WTC11 (cell line): ENCODE measurements at regions of chr1 and their contacts with region 1.

Region 1: DNA sequence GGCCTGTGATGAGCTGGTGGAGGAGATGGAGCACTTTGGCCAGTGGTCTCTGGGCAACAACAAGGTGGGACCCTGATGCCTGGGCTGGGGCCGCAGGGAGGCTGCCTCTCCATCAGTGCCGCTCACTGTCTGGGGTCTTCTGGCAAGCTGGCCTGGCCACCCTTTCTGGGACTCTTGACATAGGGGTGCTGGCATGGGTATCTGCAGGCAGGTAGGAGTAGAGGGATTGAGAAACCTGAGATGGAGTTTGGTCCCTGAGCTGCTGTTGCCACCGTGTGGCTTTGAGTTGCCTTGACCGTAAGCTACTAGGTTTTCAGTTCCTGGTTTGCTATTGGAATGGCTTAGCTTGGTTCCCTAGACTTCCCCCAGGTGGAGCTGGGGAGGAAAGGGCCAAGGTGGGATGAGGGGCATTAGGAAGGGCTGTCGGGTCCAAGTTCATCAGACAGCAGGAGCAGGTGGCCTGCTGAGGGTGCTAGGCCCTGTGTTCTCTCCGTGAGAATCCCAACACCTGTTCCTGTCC is 13.2 kb upstream of the MFN2 start:
- DNase-seq: peak; percentile 78
- ATAC-seq: peak; percentile 99
- H3K4me3 Mint-ChIP-seq: no peak overlapping the region
- H3K27ac Mint-ChIP-seq: peak overlapping the region; percentile 74; the same call in 1 of the 2 replicates
- H3K4me1 Mint-ChIP-seq: no peaks in the 10 kb centered on the region
- H3K27me3 Mint-ChIP-seq: no peaks in the 10 kb centered on the region
- CTCF ChIP-seq: no peak

Region 2: GRCh38 chr1:11719313-11720032 is 247.6 kb before region 1 on chr1:
- CTCF ChIA-PET with region 1: no interaction called
- POLR2A ChIA-PET with region 1: no interaction called
- DNase-seq: peak; percentile 81
- ATAC-seq: peak; percentile 75
- H3K4me3 Mint-ChIP-seq: peak overlapping the region; percentile 51
- H3K27ac Mint-ChIP-seq: no peak overlapping the region
- H3K4me1 Mint-ChIP-seq: peaks cover 9% of the 10 kb centered on the region
- H3K27me3 Mint-ChIP-seq: no peaks in the 10 kb centered on the region; the same call in 1 of the 2 replicates
- CTCF ChIP-seq: peak; percentile 96

Region 3: GRCh38 chr1:11858968-11859871 is 107.9 kb before region 1 on chr1:
- CTCF ChIA-PET with region 1: interaction called, 12 read pairs
- POLR2A ChIA-PET with region 1: no interaction called
- DNase-seq: peak; percentile 92
- ATAC-seq: peak; percentile 80
- H3K4me3 Mint-ChIP-seq: peak overlapping the region; percentile 29
- H3K27ac Mint-ChIP-seq: no peak overlapping the region
- H3K4me1 Mint-ChIP-seq: no peaks in the 10 kb centered on the region
- H3K27me3 Mint-ChIP-seq: peaks cover 46% of the 10 kb centered on the region
- CTCF ChIP-seq: no peak

Region 4: GRCh38 chr1:11907275-11908094 is 59.6 kb before region 1 on chr1:
- CTCF ChIA-PET with region 1: interaction called, 49 read pairs
- POLR2A ChIA-PET with region 1: interaction called, 61 read pairs
- DNase-seq: peak; percentile 86
- ATAC-seq: peak; percentile 54
- H3K4me3 Mint-ChIP-seq: peak overlapping the region; percentile 85
- H3K27ac Mint-ChIP-seq: peak overlapping the region; percentile 100
- H3K4me1 Mint-ChIP-seq: peaks cover 9% of the 10 kb centered on the region
- H3K27me3 Mint-ChIP-seq: no peaks in the 10 kb centered on the region; the same call in 1 of the 2 replicates
- CTCF ChIP-seq: no peak

Region 5: DNA sequence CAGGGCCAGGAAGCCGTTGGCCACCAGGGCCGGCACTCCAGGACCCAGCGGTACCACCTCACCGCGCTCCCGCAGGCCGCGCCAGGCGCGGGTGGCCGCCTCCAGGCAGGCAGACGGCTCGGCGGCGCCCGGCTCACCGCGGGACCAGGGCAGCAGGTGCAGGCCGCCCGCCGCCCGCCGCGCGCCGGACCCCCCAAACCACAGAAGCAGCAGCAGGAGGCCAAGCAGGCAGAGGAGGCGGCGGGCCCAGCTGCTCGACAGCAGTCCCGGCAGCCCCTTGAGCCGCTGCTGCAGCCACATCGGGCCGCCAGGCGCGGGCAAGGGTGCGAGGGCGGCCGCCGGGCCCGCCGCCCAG is 41.2 kb before region 1 on chr1:
- CTCF ChIA-PET with region 1: interaction called, 15 read pairs
- POLR2A ChIA-PET with region 1: no interaction called
- DNase-seq: peak; percentile 25
- ATAC-seq: peak; percentile 28
- H3K4me3 Mint-ChIP-seq: no peak overlapping the region
- H3K27ac Mint-ChIP-seq: no peak overlapping the region
- H3K4me1 Mint-ChIP-seq: peaks cover 26% of the 10 kb centered on the region
- H3K27me3 Mint-ChIP-seq: no peaks in the 10 kb centered on the region
- CTCF ChIP-seq: no peak

Region 6: DNA sequence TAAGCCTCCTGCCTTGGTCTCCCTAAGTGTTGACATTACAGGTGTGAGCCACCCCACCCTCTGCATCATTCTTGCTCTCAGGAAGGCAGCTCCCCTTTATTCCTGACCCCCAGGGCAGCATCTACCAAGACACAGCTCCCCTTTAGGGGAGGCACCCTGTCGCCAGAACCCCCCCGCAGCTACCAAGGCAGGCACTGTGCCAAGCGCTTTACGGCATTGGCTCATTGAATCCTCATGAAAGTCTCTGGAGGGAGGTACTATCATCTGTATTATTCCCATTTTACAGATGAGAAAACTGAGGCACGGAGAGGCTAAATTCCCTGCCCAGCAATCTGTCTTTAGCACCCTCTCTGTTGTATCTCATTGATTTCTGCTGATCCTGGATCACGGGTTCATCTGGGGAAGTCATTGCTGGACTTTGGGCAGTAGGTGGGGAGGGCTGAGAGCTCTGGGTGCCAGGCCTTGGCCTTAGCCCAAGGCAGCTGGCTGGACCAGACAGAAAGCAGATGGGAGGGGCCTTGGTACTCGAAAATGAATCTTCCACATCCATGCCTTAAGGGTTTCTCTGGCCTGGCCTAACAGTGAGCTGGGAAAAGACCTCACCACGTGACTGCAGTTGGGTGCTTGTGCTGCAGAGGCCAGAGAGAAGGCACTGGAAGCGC is 26.7 kb before region 1 on chr1:
- CTCF ChIA-PET with region 1: interaction called, 25 read pairs
- POLR2A ChIA-PET with region 1: interaction called, 3 read pairs
- DNase-seq: no peak
- ATAC-seq: no peak
- H3K4me3 Mint-ChIP-seq: no peak overlapping the region
- H3K27ac Mint-ChIP-seq: no peak overlapping the region
- H3K4me1 Mint-ChIP-seq: peaks cover 32% of the 10 kb centered on the region
- H3K27me3 Mint-ChIP-seq: no peaks in the 10 kb centered on the region; the same call in 1 of the 2 replicates
- CTCF ChIP-seq: no peak

Region 7: GRCh38 chr1:11979851-11980675 is 13.0 kb after region 1 on chr1 and contains the start of gene MFN2:
- CTCF ChIA-PET with region 1: interaction called, 27 read pairs
- POLR2A ChIA-PET with region 1: interaction called, 6 read pairs
- DNase-seq: peak; percentile 99
- ATAC-seq: peak; percentile 97
- H3K4me3 Mint-ChIP-seq: peak within 1 kb of the TSS; percentile 98
- H3K27ac Mint-ChIP-seq: peak within 1 kb of the TSS; percentile 99
- H3K4me1 Mint-ChIP-seq: peaks cover 21% of the 10 kb centered on the region
- H3K27me3 Mint-ChIP-seq: no peaks in the 10 kb centered on the region
- CTCF ChIP-seq: no peak
- total RNA-seq, gene MFN2: 56.8 to 63.0 TPM (median 59.8 TPM) in 3 replicates

Region 8: DNA sequence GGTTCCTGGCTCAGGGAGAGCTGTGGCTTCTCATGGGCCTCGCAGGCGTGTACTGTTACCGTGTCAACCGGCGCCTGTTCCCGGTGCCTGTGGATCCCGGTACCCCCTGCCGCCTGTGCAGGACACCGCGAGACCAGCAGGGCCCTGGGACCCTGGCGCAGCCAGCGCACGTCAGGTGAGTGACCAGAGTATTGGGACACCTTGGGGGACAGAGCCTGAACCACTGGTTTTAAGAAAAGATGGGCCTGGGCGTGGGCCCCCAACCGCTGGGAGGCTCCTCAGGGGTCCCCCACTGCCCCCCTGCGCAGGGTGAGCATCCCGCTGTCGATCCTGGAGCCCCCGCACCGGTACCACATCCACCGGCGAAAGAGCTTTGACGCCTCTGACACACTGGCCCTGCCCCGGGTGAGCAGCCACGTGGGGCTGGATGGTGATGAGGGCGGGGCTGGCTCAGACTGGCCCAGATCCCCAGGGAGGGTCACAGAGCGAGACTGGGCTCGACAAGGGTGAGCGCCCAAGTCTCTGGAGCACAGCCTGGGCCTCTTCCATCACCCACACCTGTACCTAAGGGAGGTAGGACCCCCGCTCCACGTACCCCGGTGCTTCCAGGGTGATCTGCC is 62.7 kb after region 1 on chr1:
- CTCF ChIA-PET with region 1: no interaction called
- POLR2A ChIA-PET with region 1: no interaction called
- DNase-seq: no peak
- ATAC-seq: no peak
- H3K4me3 Mint-ChIP-seq: no peak overlapping the region
- H3K27ac Mint-ChIP-seq: no peak overlapping the region
- H3K4me1 Mint-ChIP-seq: no peaks in the 10 kb centered on the region
- H3K27me3 Mint-ChIP-seq: no peaks in the 10 kb centered on the region
- CTCF ChIP-seq: no peak

Region 9: GRCh38 chr1:12040457-12041051 is 73.5 kb after region 1 on chr1:
- CTCF ChIA-PET with region 1: no interaction called
- POLR2A ChIA-PET with region 1: no interaction called
- DNase-seq: no peak
- ATAC-seq: no peak
- H3K4me3 Mint-ChIP-seq: no peak overlapping the region
- H3K27ac Mint-ChIP-seq: no peak overlapping the region
- H3K4me1 Mint-ChIP-seq: no peaks in the 10 kb centered on the region
- H3K27me3 Mint-ChIP-seq: no peaks in the 10 kb centered on the region; the same call in 1 of the 2 replicates
- CTCF ChIP-seq: no peak